HEK293 (cell line): ENCODE measurements at regions of chr15 and their contacts with region 1.

Region 1: GRCh38 chr15:78808550-78808949 is 2.7 kb downstream of the ADAMTS7 start:
- H3K4me3 ChIP-seq: no peak overlapping the region
- H3K27ac ChIP-seq: no peak overlapping the region
- H3K4me1 ChIP-seq: peaks cover 3% of the 10 kb centered on the region; the same call in 1 of the 2 replicates
- CTCF ChIP-seq: no peak

Region 2: GRCh38 chr15:78822514-78822913 is 14.0 kb after region 1 on chr15:
- CTCF ChIA-PET with region 1: interaction called, 18 read pairs
- POLR2A ChIA-PET with region 1: interaction called, 3 read pairs
- H3K4me3 ChIP-seq: no peak overlapping the region
- H3K27ac ChIP-seq: no peak overlapping the region
- H3K4me1 ChIP-seq: no peaks in the 10 kb centered on the region
- CTCF ChIP-seq: no peak